Mammary epithelial cell (primary cell): ENCODE measurements at regions of chr22 and their contacts with region 1.

Region 1: DNA sequence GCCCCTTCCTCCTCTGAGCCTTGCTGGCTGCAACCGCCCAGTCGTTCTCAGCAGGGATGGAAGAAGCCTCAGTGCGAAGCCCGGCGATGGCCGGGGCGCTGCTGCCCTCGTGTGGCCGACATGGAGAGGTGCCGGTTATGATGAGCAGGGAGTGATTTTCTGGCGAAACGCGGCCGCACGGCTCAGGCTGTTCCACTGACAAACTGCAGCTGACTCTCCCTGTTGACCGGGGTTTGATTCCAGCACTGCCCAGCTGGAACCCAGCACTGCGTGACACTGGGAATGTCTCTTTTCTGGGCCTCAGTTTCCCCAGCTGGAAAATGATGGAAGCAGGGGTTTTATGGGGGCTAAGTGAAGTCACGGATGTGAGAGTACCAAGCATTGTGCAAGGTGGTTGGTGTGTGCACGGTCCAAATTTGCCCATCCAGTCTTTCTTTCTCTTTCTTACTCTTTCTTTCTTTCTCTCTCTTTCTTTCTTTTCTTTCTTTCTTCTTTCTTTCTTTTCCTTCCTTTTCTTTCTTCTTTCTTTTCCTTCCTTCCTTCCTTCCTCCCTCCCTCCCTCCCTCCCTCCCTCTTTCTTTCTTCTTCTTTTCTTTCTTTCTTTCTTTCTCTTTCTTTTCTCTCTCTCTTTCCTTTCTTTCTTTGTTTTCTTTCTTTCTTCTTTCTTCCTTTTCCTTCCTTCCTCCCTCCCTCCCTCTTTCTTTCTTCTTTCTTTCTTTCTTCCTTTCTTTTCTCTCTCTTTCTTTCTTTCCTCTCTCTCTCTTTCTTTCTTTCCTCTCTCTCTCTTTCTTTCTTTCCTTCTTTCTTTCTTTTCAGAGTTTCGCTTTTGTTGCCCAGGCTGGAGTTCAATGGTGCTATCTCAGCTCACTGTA is 25.8 kb upstream of the MPPED1 start:
- DNase-seq: peak; percentile 51
- H3K4me3 ChIP-seq: no peak overlapping the region
- H3K27ac ChIP-seq: no peak overlapping the region
- H3K4me1 ChIP-seq: no peaks in the 10 kb centered on the region
- H3K27me3 ChIP-seq: peaks cover 5% of the 10 kb centered on the region
- CTCF ChIP-seq: peak; percentile 71 to 87

Region 2: GRCh38 chr22:43230971-43231723 is 154.9 kb before region 1 on chr22:
- CTCF ChIA-PET with region 1: no interaction called
- dilution Hi-C with region 1: no loop called
- in situ Hi-C with region 1: no loop called
- intact Hi-C with region 1: loop called (anchors 1 kb)
- DNase-seq: peak; percentile 32
- H3K4me3 ChIP-seq: no peak overlapping the region
- H3K27ac ChIP-seq: no peak overlapping the region
- H3K4me1 ChIP-seq: no peaks in the 10 kb centered on the region
- H3K27me3 ChIP-seq: no peaks in the 10 kb centered on the region
- CTCF ChIP-seq: peak; percentile 86 to 91

Region 3: DNA sequence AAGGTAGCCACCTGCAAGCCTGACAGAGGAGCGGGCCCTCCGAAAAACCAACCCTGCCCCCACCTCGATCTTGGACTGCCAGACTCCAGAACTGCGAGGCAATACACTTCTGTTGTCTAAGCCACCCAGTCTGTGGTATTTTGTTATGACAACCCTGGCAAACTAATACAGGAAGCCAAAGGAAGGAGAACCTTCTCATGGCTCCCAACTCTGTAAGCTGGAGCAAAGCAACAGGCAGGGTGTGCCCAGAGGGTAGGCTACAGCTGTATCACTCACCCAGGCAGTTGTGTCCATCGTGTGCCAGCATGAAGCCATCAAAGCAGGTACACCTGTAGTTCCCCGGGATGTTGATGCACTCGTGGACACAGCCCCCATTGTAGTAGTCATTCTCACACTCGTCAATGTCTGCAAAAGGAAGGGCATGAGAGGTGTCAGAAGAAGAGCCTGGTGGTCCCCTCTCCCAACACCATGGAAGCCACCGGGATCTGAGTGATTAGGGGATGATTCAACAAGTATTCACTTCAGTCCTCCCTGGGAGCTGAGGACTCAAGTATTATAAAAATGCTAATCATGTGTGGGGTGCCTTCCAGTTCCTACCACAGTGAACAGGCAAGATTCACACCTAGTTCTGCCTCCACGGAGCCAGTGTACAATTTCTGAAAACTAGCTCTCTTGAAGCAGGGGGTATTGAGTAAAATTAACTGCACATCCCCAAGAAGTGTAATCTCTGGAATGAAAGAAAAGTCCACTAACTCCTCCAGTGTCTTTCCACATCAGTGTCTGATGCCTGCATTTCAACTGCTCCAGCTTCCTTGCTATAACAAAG is 66.1 kb before region 1 on chr22:
- CTCF ChIA-PET with region 1: no interaction called
- dilution Hi-C with region 1: no loop called
- in situ Hi-C with region 1: no loop called
- intact Hi-C with region 1: no loop called
- DNase-seq: no peak
- H3K4me3 ChIP-seq: no peak overlapping the region
- H3K27ac ChIP-seq: no peak overlapping the region
- H3K4me1 ChIP-seq: no peaks in the 10 kb centered on the region
- H3K27me3 ChIP-seq: peaks cover 4% of the 10 kb centered on the region
- CTCF ChIP-seq: no peak

Region 4: GRCh38 chr22:43435851-43436811 is 50.1 kb after region 1 on chr22:
- CTCF ChIA-PET with region 1: no interaction called
- dilution Hi-C with region 1: no loop called
- in situ Hi-C with region 1: no loop called
- intact Hi-C with region 1: no loop called
- DNase-seq: no peak
- H3K4me3 ChIP-seq: no peak overlapping the region
- H3K27ac ChIP-seq: no peak overlapping the region
- H3K4me1 ChIP-seq: no peaks in the 10 kb centered on the region
- H3K27me3 ChIP-seq: peaks cover 12% of the 10 kb centered on the region
- CTCF ChIP-seq: no peak

Region 5: GRCh38 chr22:43537014-43537585 is 151.1 kb after region 1 on chr22:
- CTCF ChIA-PET with region 1: no interaction called
- dilution Hi-C with region 1: no loop called
- in situ Hi-C with region 1: no loop called
- intact Hi-C with region 1: loop called (anchors 2 kb)
- DNase-seq: no peak
- H3K4me3 ChIP-seq: no peak overlapping the region
- H3K27ac ChIP-seq: no peak overlapping the region
- H3K4me1 ChIP-seq: peaks cover 28% of the 10 kb centered on the region
- H3K27me3 ChIP-seq: no peaks in the 10 kb centered on the region
- CTCF ChIP-seq: peak; percentile 25 to 31

Region 6: DNA sequence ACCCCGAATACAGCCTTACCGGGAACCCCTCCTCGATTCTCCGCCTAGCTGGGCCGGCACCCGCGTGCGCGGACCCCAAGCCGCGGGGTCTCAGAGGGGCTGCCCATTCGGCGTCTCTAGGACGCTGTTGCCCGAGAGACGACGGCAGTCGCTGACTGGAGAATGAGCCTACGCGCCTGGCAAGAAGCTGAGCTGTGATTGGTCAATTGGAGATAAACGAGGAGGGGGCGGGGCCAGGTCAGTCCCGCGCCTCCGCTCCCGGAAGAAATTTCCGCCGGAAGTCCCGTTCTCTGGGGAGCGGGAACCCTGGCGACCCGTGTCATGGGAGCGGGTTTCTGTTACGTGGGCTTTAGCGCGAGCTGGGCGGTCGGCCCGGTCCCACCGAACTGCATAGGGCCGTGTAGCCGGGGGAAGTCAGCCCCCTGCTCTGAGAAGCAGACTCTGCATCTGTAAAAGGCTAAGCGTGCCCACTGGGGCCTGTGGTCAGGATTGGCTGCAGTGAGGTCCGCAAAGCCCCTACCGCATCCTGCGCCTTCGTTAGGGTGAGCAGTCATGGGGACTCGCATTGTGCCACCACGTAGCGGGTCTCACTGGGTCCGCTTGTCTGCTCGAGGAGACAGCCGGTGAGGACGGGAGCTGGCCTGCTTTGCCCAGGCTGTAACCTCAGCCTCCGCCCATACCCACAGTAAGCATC is 426.3 kb after region 1 on chr22 and contains the start of gene EFCAB6:
- CTCF ChIA-PET with region 1: no interaction called
- dilution Hi-C with region 1: no loop called
- in situ Hi-C with region 1: loop called in 1 of 2 experiments (anchors 25 kb)
- intact Hi-C with region 1: no loop called
- DNase-seq: peak; percentile 87
- H3K4me3 ChIP-seq: peak within 1 kb of the TSS; percentile 63 to 89 (median 73)
- H3K27ac ChIP-seq: peak within 1 kb of the TSS; percentile 71
- H3K4me1 ChIP-seq: peaks cover 17% of the 10 kb centered on the region
- H3K27me3 ChIP-seq: no peaks in the 10 kb centered on the region
- CTCF ChIP-seq: no peak
- total RNA-seq, gene EFCAB6: 0.59 to 2.0 TPM

Region 7: GRCh38 chr22:43884600-43885325 is 498.8 kb after region 1 on chr22:
- CTCF ChIA-PET with region 1: no interaction called
- dilution Hi-C with region 1: no loop called
- in situ Hi-C with region 1: no loop called
- intact Hi-C with region 1: loop called (anchors 1 kb)
- DNase-seq: peak; percentile 23
- H3K4me3 ChIP-seq: no peak overlapping the region
- H3K27ac ChIP-seq: no peak overlapping the region
- H3K4me1 ChIP-seq: no peaks in the 10 kb centered on the region
- H3K27me3 ChIP-seq: no peaks in the 10 kb centered on the region
- CTCF ChIP-seq: peak; percentile 76 to 89